ENCODE measurements at regions of chr11 and their contacts with region 1.

Region 1: GRCh38 chr11:65888163-65888814 is at the start of gene FIBP:
- DNase-seq: peak; percentile 98
- ATAC-seq: peak; percentile 68
- H3K4me3 Mint-ChIP-seq: peak within 1 kb of the TSS; percentile 94
- H3K27ac Mint-ChIP-seq: peak within 1 kb of the TSS; percentile 91
- H3K4me1 Mint-ChIP-seq: peaks cover 51% of the 10 kb centered on the region
- H3K27me3 Mint-ChIP-seq: no peaks in the 10 kb centered on the region
- CTCF ChIP-seq: peak; percentile 75
- total RNA-seq, gene FIBP: 78.8 to 79.9 TPM

Region 2: DNA sequence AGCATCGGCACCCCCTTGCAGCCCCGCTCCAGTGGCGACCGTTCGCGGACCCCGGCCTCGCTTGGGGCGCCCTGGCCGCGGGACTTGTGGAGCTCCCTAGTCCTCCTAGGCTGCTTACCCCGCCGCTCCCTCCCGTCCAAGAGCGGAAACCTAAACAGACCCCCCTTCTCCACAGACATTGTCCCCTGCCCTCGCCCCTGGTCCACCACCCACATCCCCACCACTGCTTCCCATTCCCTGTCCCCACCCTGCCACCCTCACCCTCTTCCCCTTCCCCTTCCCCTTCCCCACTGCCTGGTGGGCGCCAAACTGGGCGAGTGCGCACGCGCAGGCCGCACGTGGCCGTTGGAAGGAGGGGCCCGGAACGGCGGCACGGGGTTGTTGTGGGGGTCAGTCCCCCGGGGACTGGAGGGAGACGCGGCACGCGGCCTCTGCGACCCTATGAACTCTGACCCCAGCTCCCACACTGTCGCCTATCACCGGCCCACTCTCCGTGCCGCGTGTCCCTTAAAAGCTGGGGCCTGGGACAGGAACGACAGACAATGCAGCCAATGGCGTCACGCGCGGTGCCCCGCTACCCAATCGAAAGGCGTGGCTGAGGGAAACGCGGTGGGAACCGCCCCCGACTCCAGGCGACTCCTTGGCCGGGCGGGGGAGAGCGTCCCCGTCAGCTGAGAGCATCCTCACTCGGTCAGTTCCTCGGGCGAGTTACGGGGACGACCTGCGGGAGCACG is 54.8 kb before region 1 on chr11 and contains the start of gene SNX32:
- CTCF ChIA-PET with region 1: interaction called, 11 read pairs
- POLR2A ChIA-PET with region 1: interaction called, 3 read pairs
- intact Hi-C with region 1: no loop called
- DNase-seq: peak; percentile 98
- ATAC-seq: peak; percentile 100
- H3K4me3 Mint-ChIP-seq: no peak within 1 kb of the TSS
- H3K27ac Mint-ChIP-seq: no peak within 1 kb of the TSS
- H3K4me1 Mint-ChIP-seq: peaks cover 28% of the 10 kb centered on the region
- H3K27me3 Mint-ChIP-seq: peaks cover 2% of the 10 kb centered on the region
- CTCF ChIP-seq: no peak
- total RNA-seq, gene SNX32: 1.6 to 2.1 TPM

Region 3: GRCh38 chr11:65873318-65874156 is 14.8 kb before region 1 on chr11:
- CTCF ChIA-PET with region 1: interaction called, 153 read pairs
- POLR2A ChIA-PET with region 1: interaction called, 560 read pairs
- intact Hi-C with region 1: no loop called
- DNase-seq: peak; percentile 97
- ATAC-seq: peak; percentile 97
- H3K4me3 Mint-ChIP-seq: peak overlapping the region; percentile 84
- H3K27ac Mint-ChIP-seq: peak overlapping the region; percentile 81
- H3K4me1 Mint-ChIP-seq: peaks cover 49% of the 10 kb centered on the region
- H3K27me3 Mint-ChIP-seq: no peaks in the 10 kb centered on the region
- CTCF ChIP-seq: no peak

Region 4: DNA sequence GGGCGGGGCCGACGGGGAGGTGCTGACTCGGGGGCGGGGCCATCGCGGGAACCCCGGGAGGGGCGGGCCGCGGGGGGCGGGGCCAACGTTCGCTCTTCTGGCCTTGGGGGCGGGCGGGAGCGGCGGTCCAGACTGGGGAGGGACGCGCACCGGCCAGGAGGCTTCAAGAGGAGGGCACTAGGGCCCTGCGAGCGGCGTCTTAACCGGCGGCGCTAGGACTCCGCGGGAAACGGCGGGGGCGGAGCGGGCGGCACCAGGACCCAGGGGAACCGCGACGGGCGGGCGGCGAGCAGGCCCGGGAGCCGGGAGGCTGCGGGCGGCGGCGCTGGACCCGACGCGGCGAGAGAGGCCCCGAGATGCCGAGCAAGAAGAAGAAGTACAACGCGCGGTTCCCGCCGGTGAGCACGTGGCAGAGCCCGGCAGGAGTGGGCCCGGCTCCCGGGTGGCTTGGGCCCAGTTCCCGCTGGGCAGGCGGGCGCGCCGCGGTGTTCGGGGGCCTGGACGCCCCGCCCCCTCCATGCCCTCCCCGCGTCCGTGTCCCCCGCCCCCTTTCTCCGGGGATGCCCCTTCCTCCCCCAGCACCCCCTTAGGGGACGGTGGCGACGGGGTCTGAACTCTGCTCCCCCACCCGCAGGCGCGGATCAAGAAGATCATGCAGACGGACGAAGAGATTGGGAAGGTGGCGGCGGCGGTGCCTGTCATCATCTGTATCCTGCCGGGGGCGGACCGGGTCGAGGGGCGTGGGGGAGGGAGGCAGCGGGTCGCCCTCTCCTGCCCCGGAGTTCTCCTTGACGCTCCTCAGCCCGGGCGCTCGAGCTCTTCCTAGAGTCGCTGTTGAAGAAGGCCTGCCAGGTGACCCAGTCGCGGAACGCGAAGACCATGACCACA is 31.1 kb after region 1 on chr11 and contains the start of gene DRAP1:
- CTCF ChIA-PET with region 1: interaction called, 16 read pairs
- POLR2A ChIA-PET with region 1: interaction called, 20 read pairs
- intact Hi-C with region 1: no loop called
- DNase-seq: peak; percentile 99
- ATAC-seq: peak; percentile 92
- H3K4me3 Mint-ChIP-seq: peak within 1 kb of the TSS; percentile 92
- H3K27ac Mint-ChIP-seq: peak within 1 kb of the TSS; percentile 87
- H3K4me1 Mint-ChIP-seq: peaks cover 32% of the 10 kb centered on the region
- H3K27me3 Mint-ChIP-seq: no peaks in the 10 kb centered on the region
- CTCF ChIP-seq: no peak
- total RNA-seq, gene DRAP1: 135 TPM

Region 5: GRCh38 chr11:65988791-65989592 is 100.7 kb after region 1 on chr11:
- CTCF ChIA-PET with region 1: interaction called, 41 read pairs
- POLR2A ChIA-PET with region 1: interaction called, 4 read pairs
- intact Hi-C with region 1: loop called (anchors 5 kb)
- DNase-seq: peak; percentile 98
- ATAC-seq: peak; percentile 99
- H3K4me3 Mint-ChIP-seq: no peak overlapping the region
- H3K27ac Mint-ChIP-seq: peak overlapping the region; percentile 53
- H3K4me1 Mint-ChIP-seq: peaks cover 5% of the 10 kb centered on the region
- H3K27me3 Mint-ChIP-seq: no peaks in the 10 kb centered on the region
- CTCF ChIP-seq: peak; percentile 99

Region 6: GRCh38 chr11:66651016-66651415 is 762.7 kb after region 1 on chr11:
- CTCF ChIA-PET with region 1: no interaction called
- POLR2A ChIA-PET with region 1: no interaction called
- intact Hi-C with region 1: no loop called
- DNase-seq: no peak
- ATAC-seq: peak; percentile 29
- H3K4me3 Mint-ChIP-seq: no peak overlapping the region
- H3K27ac Mint-ChIP-seq: peak overlapping the region; percentile 55
- H3K4me1 Mint-ChIP-seq: peaks cover 49% of the 10 kb centered on the region
- H3K27me3 Mint-ChIP-seq: no peaks in the 10 kb centered on the region
- CTCF ChIP-seq: no peak

Measured in activated CD8-positive, alpha-beta T cell treated with anti-CD3 and anti-CD28 coated beads for 36 hours (primary cell).